ENCODE measurements at regions of chr19 and their contacts with region 1.

Region 1: DNA sequence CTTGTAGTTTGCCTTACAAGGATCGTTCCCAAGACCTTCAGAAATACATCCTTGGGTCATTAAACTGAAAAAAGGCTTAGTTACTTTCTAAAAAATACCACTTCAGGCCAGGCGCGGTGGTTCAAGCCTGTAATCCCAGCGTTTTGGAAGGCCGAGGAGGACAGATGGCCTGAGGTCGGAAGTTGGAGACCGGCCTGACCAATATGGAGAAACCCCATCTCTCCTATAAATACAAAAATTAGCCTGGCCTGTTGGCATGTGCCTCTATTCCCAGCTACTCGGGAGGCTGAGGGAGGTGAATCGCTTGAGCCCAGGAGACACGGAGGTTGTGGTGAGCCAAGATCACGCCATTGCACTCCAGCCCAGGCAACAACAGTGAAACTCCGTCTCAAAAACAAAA is 2.2 kb upstream of the ZNF28 start:
- DNase-seq: peak in 1 of 10 donors; percentile 79
- H3K4me3 ChIP-seq: no peak overlapping the region
- H3K27ac ChIP-seq: peak overlapping the region in 1 of 59 donors; percentile 61
- H3K27me3 ChIP-seq: no peaks in the 10 kb centered on the region
- CTCF ChIP-seq: no peak

Region 2: GRCh38 chr19:52853880-52854279 is 30.2 kb after region 1 on chr19:
- intact Hi-C with region 1: loop called in 1 of 2 experiments (anchors 5 kb)
- DNase-seq: no peak
- H3K4me3 ChIP-seq: no peak overlapping the region
- H3K27ac ChIP-seq: no peak overlapping the region
- H3K27me3 ChIP-seq: no peaks in the 10 kb centered on the region
- CTCF ChIP-seq: no peak

Region 3: DNA sequence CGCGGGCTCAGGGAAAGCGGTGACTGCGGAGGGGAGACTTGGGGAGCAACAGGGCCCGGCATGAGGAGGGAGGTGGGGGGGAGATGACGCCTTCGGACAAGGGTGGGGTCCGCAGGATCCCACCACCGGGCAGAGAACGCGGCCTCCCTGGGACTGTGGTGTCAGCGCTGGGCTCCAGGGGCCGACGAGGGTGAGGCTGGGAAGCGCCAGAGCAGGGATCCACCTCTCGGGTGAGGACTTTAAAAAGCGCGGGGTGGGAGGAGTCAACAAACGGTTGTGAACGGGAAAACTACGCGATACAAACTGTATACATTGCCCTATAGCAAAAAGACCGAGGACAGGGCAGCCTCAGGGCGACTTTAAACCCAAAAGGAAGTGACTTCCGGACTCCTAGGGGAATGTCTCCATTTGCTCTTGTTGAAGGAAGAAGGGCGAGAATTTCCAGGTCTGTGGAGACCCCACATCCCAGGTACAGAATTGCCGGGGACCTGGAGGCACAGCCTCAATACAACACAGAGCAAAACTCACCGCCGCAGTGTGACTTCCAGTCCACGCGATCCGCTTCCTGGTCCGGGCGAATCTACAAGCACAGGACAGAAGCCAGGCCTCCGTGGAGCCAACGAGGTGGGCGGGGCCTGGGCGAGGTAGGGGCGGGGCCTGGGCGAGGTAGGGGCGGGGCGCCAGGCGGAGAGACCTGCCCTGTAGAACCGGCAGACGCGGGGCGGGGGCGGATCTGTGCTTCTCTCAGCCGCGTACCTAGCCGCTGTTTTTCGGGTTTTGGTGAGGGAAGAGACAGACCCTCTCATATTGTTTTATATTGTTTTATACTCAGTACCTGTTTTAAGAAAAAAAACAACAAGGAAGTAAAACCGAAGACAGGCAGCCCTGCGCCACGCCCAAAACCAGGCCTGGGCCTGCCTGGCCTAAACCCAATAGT is 99.4 kb after region 1 on chr19 and contains the start of gene ZNF888:
- intact Hi-C with region 1: no loop called
- DNase-seq: peak; percentile 52 to 91 (median 76)
- H3K4me3 ChIP-seq: peak within 1 kb of the TSS; percentile 47 to 82 (median 69)
- H3K27ac ChIP-seq: peak within 1 kb of the TSS in 50 of 59 donors; percentile 3 to 78 (median 54)
- H3K27me3 ChIP-seq: no peaks in the 10 kb centered on the region
- CTCF ChIP-seq: no peak
- total RNA-seq, gene ZNF888: 0.81 to 5.4 (median 2.0) TPM

Region 4: DNA sequence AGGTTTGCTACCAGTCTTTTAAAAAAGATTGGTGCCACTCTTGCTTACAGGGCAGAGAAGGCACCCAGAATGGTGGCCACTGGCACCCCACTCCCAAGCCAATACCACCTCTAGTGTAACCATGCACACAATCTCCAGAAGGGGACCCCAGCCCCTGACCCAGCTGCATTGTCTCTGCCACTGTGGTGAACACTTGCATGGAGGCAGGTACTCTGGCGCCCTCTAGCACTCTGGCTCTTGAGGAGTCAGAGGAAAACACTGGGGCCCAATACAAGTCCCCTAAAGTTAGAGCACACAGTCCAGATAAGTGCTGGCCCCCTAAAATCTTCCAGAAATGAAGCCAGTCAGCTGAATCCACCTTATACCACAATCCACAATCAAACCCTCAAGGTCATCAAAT is 196.0 kb after region 1 on chr19:
- intact Hi-C with region 1: no loop called
- DNase-seq: no peak
- H3K4me3 ChIP-seq: no peak overlapping the region
- H3K27ac ChIP-seq: no peak overlapping the region
- H3K27me3 ChIP-seq: peaks cover 0 to 10% (median 0%) of the 10 kb centered on the region in 45 donors
- CTCF ChIP-seq: no peak